Right cardiac atrium (tissue), 5 donors: ENCODE measurements at regions of chr18 and their contacts with region 1.

Region 1: DNA sequence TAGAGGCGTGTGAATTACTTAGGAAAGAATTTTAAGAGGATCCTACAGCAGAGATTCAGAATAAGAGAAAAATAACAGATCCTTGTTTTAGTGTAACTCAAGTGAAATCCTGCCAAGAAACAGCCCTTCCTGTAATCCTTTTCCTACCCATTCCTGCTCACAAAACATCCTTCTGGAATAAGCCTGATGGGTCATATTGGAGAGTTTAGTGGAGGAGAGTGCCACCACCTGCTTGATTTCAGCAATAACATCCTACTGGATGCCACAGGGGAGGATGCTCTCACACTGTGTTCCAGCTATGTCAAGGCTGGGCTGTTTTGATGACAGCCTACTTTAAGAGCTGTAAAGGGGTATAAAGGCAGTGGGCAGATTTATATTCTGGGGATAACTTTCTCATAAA is 54.8 kb upstream of the CCDC178 start:
- DNase-seq: no peak
- ATAC-seq: peak; percentile 66 to 84
- H3K4me3 ChIP-seq: no peak overlapping the region
- H3K27ac ChIP-seq: no peak overlapping the region
- H3K4me1 ChIP-seq: no peaks in the 10 kb centered on the region
- H3K27me3 ChIP-seq: no peaks in the 10 kb centered on the region

Region 2: GRCh38 chr18:33231474-33232317 is 263.6 kb before region 1 on chr18:
- intact Hi-C with region 1: loop called in 1 of 4 experiments (anchors 10 kb)
- DNase-seq: peak; percentile 51 to 68 (median 54)
- ATAC-seq: peak; percentile 64 to 82
- H3K4me3 ChIP-seq: no peak overlapping the region
- H3K27ac ChIP-seq: no peak overlapping the region
- H3K4me1 ChIP-seq: no peaks in the 10 kb centered on the region
- H3K27me3 ChIP-seq: no peaks in the 10 kb centered on the region

Region 3: DNA sequence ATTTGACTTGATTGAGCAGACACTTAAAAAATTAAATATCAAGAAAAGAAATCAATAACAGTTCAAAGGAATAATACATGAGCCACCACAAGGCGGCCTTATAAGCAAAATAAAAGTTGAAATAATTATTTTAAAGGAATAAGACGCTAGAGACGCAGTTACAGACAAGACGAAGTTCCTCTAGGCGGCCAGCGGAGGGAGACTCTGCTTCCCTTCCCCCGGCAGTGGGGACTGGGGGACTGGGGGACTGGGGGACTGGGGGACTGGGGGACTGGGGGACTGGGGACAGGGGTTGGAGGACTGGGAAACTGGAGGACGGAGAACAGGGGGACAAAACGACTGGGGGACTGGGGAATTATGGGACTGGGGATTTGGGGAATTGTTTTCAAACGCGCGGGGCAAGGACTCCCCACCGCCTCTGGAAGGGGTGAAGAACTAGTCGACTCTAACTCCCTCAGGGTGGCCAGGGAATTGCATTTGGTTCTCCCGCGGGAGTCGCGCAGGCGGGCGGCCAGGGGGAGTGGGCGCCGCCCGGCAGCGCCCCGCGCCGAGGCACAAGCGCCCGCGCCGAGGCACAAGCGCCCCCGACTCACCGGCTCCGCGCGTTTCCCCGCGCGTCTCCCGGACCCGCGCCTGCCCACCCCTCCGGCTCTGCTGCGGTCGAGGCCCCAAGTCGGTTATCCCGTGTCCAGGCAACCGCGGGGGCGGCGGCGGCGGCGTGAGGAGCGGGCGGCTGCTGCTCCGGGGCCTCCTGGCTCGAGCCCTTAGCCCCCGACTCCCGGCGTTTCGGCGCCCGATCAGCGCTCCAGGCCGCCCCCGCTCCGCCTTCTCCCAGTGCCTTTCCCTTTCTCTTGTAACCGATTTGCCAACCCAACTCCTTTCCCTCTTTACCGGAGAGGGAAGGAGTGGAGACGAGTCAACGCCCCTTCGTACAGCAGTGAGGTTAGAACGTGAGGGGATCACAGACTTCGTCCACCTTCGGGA is 54.9 kb before region 1 on chr18 and contains the start of gene CCDC178:
- intact Hi-C with region 1: loop called in 1 of 4 experiments (anchors 10 kb)
- DNase-seq: peak; percentile 57 to 74 (median 70)
- ATAC-seq: peak; percentile 81 to 85
- H3K4me3 ChIP-seq: peak within 1 kb of the TSS; percentile 91
- H3K27ac ChIP-seq: no peak within 1 kb of the TSS
- H3K4me1 ChIP-seq: no peaks in the 10 kb centered on the region
- H3K27me3 ChIP-seq: no peaks in the 10 kb centered on the region
- total RNA-seq, gene CCDC178: 0.14 to 0.29 TPM in 2 of 4 donors, not detected in the others